ENCODE measurements at regions of chr1 and their contacts with region 1.

Region 1: DNA sequence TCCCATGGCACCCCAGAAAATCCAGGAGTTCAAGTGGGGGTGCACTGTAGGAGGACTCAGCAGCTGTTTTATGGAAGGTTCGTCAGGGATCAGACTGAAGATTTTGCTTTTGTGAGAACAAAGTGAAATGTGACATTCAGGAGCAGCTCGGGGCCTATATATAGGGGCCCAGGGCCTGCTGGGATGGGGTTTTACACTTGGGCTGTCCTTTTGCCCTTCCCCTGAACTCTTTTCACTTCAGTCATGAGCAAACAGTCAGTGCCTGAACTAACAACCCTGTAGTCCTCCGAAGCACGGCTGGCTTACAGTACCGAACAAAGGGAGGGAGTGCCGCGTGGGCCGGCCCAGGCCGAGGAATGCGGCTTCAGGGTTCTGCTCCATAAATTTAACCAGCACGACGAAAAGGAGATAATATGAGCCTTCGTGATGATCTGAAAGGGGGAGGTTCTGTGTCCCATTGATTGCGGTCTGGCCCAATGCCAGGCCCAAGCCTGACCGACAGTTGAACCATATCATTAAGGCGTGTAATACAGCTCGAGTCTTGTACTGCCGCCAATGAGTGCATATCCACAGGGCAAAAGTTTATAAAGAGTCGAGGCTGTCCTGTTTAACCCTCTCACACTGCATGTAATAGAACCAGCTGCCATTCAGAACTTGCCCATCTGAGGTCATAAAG is 139.9 kb downstream of the DHRS3 start:
- DNase-seq: peak in 1 of 9 donors; percentile 27
- ATAC-seq: peak; percentile 19
- H3K4me3 ChIP-seq: peak overlapping the region; percentile 42
- H3K4me3 Mint-ChIP-seq: peak overlapping the region; percentile 71 to 86 (median 78)
- H3K27ac ChIP-seq: peak overlapping the region; percentile 66
- H3K27ac Mint-ChIP-seq: peak overlapping the region; percentile 89 to 99 (median 96)
- H3K4me1 ChIP-seq: peaks cover 64 to 89% of the 10 kb centered on the region in 2 donors
- H3K4me1 Mint-ChIP-seq: peaks cover 58 to 97% (median 94%) of the 10 kb centered on the region in 7 donors
- H3K27me3 ChIP-seq: no peaks in the 10 kb centered on the region
- H3K27me3 Mint-ChIP-seq: no peaks in the 10 kb centered on the region

Region 2: DNA sequence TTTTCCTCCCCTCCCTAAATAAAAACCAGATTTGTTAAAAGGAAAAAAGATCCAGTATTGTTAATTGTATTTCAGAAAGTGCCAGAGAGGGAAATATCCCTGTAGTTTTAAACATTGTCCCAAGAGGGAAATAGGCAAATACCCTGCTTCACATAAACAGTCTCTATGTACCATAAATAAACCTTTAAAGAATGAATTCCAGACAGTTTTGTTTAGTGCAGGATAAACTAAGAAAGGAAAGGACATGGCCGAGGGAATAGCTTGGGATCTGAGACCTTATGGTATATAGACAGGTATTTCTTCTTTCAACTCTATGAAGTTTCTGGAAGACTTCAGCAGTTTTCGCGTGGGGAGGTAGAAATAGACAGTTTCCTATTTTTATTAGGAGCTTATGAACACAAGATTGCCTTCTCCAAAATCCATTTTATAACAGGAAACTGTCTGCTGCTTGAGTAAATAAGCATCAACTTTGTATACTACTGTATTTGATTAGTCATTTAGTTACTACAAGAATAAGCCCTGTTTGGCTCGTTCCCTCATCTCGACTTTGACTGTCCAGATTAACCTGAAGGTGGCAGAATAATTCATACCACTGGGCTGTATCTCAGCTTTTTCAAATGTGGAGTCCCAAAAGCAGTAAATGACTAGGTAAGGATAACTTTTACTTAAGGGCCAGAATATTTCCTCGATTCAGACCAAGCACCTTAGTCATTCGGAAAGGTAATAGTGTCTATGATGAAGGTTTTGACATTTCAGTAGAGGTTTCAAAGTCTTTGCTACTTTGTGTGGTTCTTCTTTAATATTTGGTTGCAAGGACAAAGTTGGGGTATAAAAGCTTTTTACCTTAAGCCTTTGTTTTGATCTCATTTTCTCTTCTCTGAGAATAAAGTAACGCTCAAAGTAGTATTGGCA is 70.8 kb before region 1 on chr1:
- CTCF ChIA-PET with region 1: interaction called, 9 read pairs
- POLR2A ChIA-PET with region 1: interaction called, 4 read pairs
- intact Hi-C with region 1: loop called in 1 of 2 experiments (anchors 2 kb)
- DNase-seq: peak in 5 of 9 donors; percentile 20 to 45 (median 43)
- ATAC-seq: peak; percentile 49
- H3K4me3 ChIP-seq: no peak overlapping the region
- H3K4me3 Mint-ChIP-seq: no peak overlapping the region
- H3K27ac ChIP-seq: no peak overlapping the region
- H3K27ac Mint-ChIP-seq: peak overlapping the region in 2 of 9 donors; percentile 59 to 61
- H3K4me1 ChIP-seq: peaks cover 0 to 11% of the 10 kb centered on the region in 2 donors
- H3K4me1 Mint-ChIP-seq: peaks cover 10 to 57% (median 47%) of the 10 kb centered on the region in 7 donors
- H3K27me3 ChIP-seq: no peaks in the 10 kb centered on the region
- H3K27me3 Mint-ChIP-seq: no peaks in the 10 kb centered on the region

Region 3: GRCh38 chr1:12454406-12455391 is 23.4 kb before region 1 on chr1:
- CTCF ChIA-PET with region 1: interaction called, 4 read pairs
- POLR2A ChIA-PET with region 1: interaction called, 212 read pairs
- intact Hi-C with region 1: loop called (anchors 1 kb)
- DNase-seq: no peak
- ATAC-seq: no peak
- H3K4me3 ChIP-seq: no peak overlapping the region
- H3K4me3 Mint-ChIP-seq: peak overlapping the region in 9 of 10 donors; percentile 14 to 81 (median 61)
- H3K27ac ChIP-seq: peak overlapping the region; percentile 28
- H3K27ac Mint-ChIP-seq: peak overlapping the region; percentile 11 to 98 (median 91)
- H3K4me1 ChIP-seq: peaks cover 12 to 91% of the 10 kb centered on the region in 2 donors
- H3K4me1 Mint-ChIP-seq: peaks cover 44 to 95% (median 93%) of the 10 kb centered on the region in 7 donors
- H3K27me3 ChIP-seq: no peaks in the 10 kb centered on the region
- H3K27me3 Mint-ChIP-seq: peaks cover 0 to 10% (median 0%) of the 10 kb centered on the region in 5 donors

Measured in naive thymus-derived CD4-positive, alpha-beta T cell (primary cell).